ENCODE measurements at regions of chr17 and their contacts with region 1.

Region 1: GRCh38 chr17:4986951-4987766 is at the start of gene CAMTA2:
- DNase-seq: peak; percentile 88
- ATAC-seq: peak; percentile 80
- H3K4me3 Mint-ChIP-seq: peak within 1 kb of the TSS; percentile 92
- H3K27ac Mint-ChIP-seq: peak within 1 kb of the TSS; percentile 93
- H3K4me1 Mint-ChIP-seq: peaks cover 32% of the 10 kb centered on the region
- H3K27me3 Mint-ChIP-seq: no peaks in the 10 kb centered on the region
- CTCF ChIP-seq: no peak
- total RNA-seq, gene CAMTA2: 45.9 and 57.9 TPM in 2 replicates

Region 2: DNA sequence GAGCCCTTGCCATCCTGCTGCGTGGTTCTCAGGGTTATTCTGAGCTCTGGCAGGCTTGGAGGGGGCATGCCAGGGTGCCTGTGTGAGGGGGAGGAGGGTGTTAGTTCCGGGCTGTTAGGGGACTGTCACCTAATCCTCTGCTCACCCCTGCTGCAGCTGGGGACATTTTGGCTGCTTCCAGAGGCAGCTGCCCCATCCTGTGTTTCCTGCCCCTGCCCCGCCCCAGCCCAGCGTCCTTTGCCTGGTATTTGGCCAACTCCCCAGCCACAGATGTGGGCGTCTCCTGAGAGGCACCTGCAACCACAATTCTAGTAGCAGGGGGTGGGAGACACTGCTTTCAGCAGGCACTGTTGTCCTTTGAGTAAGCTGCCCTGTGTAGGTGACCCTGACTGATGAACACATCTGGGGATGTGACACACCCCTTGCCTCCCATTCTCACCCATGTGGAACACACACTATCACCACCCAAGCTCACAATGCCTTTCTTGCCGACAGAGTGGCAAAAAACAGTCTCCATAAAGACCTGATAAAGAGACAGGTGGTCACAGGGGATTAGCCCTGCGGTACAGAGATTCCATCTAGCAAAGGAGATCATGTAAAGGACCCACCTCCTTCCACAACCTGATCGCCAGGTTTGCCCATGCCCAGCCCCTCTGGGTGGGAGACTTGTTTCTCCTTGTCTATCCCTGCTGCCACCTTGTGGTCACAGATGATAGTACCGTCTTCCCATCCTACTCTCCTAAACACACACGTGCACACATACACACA is 83.9 kb before region 1 on chr17 and contains the start of gene CHRNE:
- CTCF ChIA-PET with region 1: interaction called, 22 read pairs
- POLR2A ChIA-PET with region 1: interaction called, 4 read pairs
- intact Hi-C with region 1: no loop called
- DNase-seq: peak; percentile 49
- ATAC-seq: peak; percentile 41
- H3K4me3 Mint-ChIP-seq: peak within 1 kb of the TSS; percentile 49
- H3K27ac Mint-ChIP-seq: peak within 1 kb of the TSS; percentile 73
- H3K4me1 Mint-ChIP-seq: peaks cover 44% of the 10 kb centered on the region
- H3K27me3 Mint-ChIP-seq: peaks cover 2% of the 10 kb centered on the region
- CTCF ChIP-seq: no peak
- total RNA-seq, gene CHRNE: 0.38 and 0.66 TPM in 2 replicates

Region 3: GRCh38 chr17:4908301-4908700 is 78.9 kb before region 1 on chr17:
- CTCF ChIA-PET with region 1: interaction called, 22 read pairs
- POLR2A ChIA-PET with region 1: interaction called, 7 read pairs
- intact Hi-C with region 1: loop called (anchors 1 kb)
- DNase-seq: no peak
- ATAC-seq: no peak
- H3K4me3 Mint-ChIP-seq: no peak overlapping the region
- H3K27ac Mint-ChIP-seq: no peak overlapping the region
- H3K4me1 Mint-ChIP-seq: peaks cover 4% of the 10 kb centered on the region
- H3K27me3 Mint-ChIP-seq: peaks cover 2% of the 10 kb centered on the region
- CTCF ChIP-seq: no peak

Region 4: DNA sequence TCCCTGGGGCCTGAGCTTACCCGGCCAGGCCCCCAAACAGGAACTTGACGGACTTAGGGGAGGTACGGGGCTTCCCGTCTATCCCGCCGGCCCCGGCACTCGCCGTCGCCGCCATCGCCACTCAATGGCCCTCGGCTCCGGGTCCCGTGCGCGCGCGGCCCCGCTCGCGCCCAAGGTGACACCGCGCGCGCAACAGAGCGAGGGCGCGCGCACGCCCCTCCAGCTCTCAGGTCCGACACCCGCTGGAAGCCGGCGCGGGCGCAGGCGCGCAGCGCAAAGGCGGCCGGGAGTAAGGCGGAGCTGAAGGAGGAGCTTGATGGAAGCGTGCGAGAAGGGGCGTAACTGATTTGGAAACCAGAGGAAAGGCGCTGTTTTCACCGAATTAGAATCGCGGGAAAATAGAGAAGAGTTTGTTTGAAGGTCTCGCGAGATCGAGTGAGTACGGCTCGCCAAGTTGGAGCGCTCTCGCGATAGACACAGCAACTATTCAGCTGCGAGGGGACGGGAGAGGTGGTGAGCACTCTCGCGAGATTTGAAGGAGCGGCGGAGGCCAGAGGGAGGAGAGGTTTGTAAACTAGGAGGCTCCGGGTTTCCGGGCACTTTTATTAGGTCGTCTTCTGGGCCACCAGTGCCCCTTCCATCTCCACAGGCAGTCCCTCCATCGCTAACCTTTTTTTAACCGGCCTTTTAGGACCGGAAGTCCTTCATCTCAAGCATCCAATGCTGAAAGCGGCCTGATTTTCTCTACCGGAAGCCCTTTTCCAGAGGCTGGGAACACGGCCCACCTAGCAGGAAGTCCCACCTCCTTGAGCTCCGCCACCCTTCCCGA is 47.1 kb before region 1 on chr17 and contains the starts of genes RNF167 and SLC25A11:
- CTCF ChIA-PET with region 1: interaction called, 6 read pairs
- POLR2A ChIA-PET with region 1: interaction called, 61 read pairs
- intact Hi-C with region 1: loop called (anchors 2 kb)
- DNase-seq: peak; percentile 93
- ATAC-seq: peak; percentile 84
- H3K4me3 Mint-ChIP-seq: peak within 1 kb of the TSS; percentile 97
- H3K27ac Mint-ChIP-seq: peak within 1 kb of the TSS; percentile 98
- H3K4me1 Mint-ChIP-seq: peaks cover 69% of the 10 kb centered on the region
- H3K27me3 Mint-ChIP-seq: no peaks in the 10 kb centered on the region
- CTCF ChIP-seq: no peak
- total RNA-seq, gene RNF167: 93.3 and 108 TPM in 2 replicates
- total RNA-seq, gene SLC25A11: 35.3 and 35.8 TPM in 2 replicates

Region 5: GRCh38 chr17:4959261-4960000 is 27.7 kb before region 1 on chr17:
- CTCF ChIA-PET with region 1: no interaction called
- POLR2A ChIA-PET with region 1: no interaction called
- intact Hi-C with region 1: no loop called
- DNase-seq: no peak
- ATAC-seq: no peak
- H3K4me3 Mint-ChIP-seq: no peak overlapping the region
- H3K27ac Mint-ChIP-seq: no peak overlapping the region
- H3K4me1 Mint-ChIP-seq: no peaks in the 10 kb centered on the region
- H3K27me3 Mint-ChIP-seq: no peaks in the 10 kb centered on the region
- CTCF ChIP-seq: no peak

Region 6: DNA sequence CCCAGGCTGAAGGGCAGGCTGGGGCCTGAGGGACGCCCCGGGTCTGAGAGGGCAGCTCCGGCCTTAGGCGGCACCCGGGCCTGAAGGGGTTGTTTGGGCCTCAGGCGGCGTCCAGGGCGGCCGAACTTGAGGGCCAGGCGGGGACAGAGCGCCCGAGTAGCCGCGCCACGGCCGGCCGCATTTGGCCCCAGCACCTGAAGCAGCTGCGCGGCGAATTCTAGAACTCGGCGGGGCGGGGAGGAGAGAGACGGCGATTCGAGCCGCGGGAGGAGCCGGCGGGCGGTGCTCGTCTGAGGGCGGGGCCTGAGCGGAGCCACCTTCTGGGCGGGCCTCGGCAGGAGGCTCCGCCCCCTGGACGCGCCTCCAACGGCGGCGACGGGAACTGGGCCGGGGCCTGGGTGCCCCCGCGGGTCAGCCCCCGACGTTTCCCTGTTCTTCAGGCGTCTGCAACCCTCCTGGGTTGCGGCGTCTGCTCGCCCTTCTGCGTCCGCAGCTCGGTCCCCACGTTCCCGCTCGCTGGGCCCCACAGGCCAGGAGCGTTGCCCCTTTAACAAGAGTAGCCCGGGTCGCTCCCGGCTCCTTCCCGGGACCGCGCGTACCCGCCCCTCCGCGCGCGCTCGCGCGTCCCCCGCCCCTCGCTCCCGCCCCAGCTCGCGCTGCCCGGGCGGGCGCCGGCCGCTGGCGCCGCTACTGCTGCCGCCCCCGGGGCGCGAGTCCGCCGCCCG is 10.3 kb after region 1 on chr17 and contains the starts of genes INCA1 and KIF1C:
- CTCF ChIA-PET with region 1: interaction called, 4 read pairs
- POLR2A ChIA-PET with region 1: interaction called, 23 read pairs
- intact Hi-C with region 1: loop called (anchors 1 kb)
- DNase-seq: peak; percentile 95
- ATAC-seq: peak; percentile 95
- H3K4me3 Mint-ChIP-seq: peak within 1 kb of the TSS; percentile 85
- H3K27ac Mint-ChIP-seq: peak within 1 kb of the TSS; percentile 90
- H3K4me1 Mint-ChIP-seq: peaks cover 20% of the 10 kb centered on the region
- H3K27me3 Mint-ChIP-seq: no peaks in the 10 kb centered on the region
- CTCF ChIP-seq: no peak
- total RNA-seq, gene INCA1: 0.17 and 0.44 TPM in 2 replicates
- total RNA-seq, gene KIF1C: 62.6 and 63.8 TPM in 2 replicates

Region 7: GRCh38 chr17:5055543-5055942 is 68.4 kb after region 1 on chr17:
- CTCF ChIA-PET with region 1: interaction called, 11 read pairs
- POLR2A ChIA-PET with region 1: no interaction called
- intact Hi-C with region 1: no loop called
- DNase-seq: no peak
- ATAC-seq: no peak
- H3K4me3 Mint-ChIP-seq: no peak overlapping the region
- H3K27ac Mint-ChIP-seq: no peak overlapping the region
- H3K4me1 Mint-ChIP-seq: peaks cover 19% of the 10 kb centered on the region
- H3K27me3 Mint-ChIP-seq: no peaks in the 10 kb centered on the region
- CTCF ChIP-seq: no peak

Region 8: DNA sequence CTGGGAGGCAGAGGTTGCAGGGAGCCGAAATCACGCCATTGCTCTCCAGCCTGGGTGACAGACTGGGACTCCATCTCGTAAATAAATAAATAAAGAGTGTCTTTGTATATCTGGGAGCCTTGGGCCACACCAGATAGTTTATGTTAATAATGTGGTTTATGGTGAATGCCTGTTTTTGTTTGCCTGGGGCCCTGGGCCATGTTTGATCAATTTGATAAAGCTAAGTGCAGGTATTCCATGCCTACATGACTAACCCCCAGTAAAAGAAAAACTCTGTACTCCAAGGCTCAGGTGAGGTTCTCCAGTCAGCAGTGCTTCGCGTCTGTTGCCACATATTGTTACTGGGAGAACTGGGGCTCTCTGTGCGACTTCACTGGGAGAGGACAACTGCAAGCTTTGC is 232.4 kb after region 1 on chr17:
- CTCF ChIA-PET with region 1: no interaction called
- POLR2A ChIA-PET with region 1: no interaction called
- intact Hi-C with region 1: no loop called
- DNase-seq: no peak
- ATAC-seq: no peak
- H3K4me3 Mint-ChIP-seq: no peak overlapping the region
- H3K27ac Mint-ChIP-seq: peak overlapping the region; percentile 98
- H3K4me1 Mint-ChIP-seq: peaks cover 63% of the 10 kb centered on the region
- H3K27me3 Mint-ChIP-seq: no peaks in the 10 kb centered on the region
- CTCF ChIP-seq: no peak